ENCODE measurements at regions of chr9 and their contacts with region 1.

Region 1: GRCh38 chr9:35829084-35829763 is at the start of gene TMEM8B:
- DNase-seq: peak; percentile 99
- ATAC-seq: peak; percentile 93
- H3K4me3 Mint-ChIP-seq: peak within 1 kb of the TSS; percentile 86
- H3K27ac Mint-ChIP-seq: peak within 1 kb of the TSS; percentile 89
- H3K4me1 Mint-ChIP-seq: peaks cover 24% of the 10 kb centered on the region
- H3K27me3 Mint-ChIP-seq: no peaks in the 10 kb centered on the region
- CTCF ChIP-seq: no peak
- total RNA-seq, gene TMEM8B: 3.4 to 4.3 TPM

Region 2: DNA sequence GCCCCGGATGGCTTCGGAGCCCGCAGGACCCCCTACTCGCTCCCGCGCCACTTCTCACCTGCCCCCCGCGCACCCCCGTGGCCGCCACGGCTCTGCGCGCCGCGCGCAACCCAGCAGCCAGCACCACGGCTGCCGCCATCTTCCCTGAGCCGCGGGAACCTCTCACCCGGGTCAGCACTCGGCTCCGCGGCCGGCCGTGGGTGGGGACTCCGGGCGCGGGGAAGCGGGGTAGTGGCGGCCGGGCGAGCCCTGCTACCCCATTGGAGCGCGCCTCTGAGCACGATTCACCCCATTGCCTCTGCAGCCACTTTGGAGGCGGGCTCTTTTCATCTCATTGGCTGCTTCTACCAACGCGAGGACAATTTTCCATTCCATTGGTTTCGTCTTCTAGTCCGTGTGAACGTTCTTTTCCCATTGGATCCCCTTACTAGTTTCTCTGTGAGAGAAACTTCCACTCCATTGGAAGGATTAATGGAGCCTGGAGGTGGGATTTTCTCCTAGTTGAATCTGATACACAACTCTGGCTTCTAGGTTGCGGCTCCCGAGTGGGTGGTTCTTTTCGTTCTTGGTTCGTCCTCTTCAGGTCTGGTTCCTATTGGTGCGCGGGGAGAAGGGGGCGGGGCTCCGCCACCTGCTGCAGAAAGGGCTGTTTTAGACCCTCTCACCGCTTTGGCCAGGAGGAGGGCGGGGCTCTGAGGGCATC is 14.2 kb before region 1 on chr9 and contains the start of gene HINT2:
- CTCF ChIA-PET with region 1: interaction called, 18 read pairs
- POLR2A ChIA-PET with region 1: interaction called, 6 read pairs
- intact Hi-C with region 1: no loop called
- DNase-seq: peak; percentile 100
- ATAC-seq: peak; percentile 85
- H3K4me3 Mint-ChIP-seq: peak within 1 kb of the TSS; percentile 92
- H3K27ac Mint-ChIP-seq: peak within 1 kb of the TSS; percentile 97
- H3K4me1 Mint-ChIP-seq: peaks cover 34% of the 10 kb centered on the region
- H3K27me3 Mint-ChIP-seq: no peaks in the 10 kb centered on the region
- CTCF ChIP-seq: no peak
- total RNA-seq, gene HINT2: 53.4 to 62.7 TPM

Region 3: GRCh38 chr9:35844716-35845270 is 15.6 kb after region 1 on chr9:
- CTCF ChIA-PET with region 1: interaction called, 10 read pairs
- POLR2A ChIA-PET with region 1: interaction called, 3 read pairs
- intact Hi-C with region 1: no loop called
- DNase-seq: peak; percentile 37
- ATAC-seq: no peak
- H3K4me3 Mint-ChIP-seq: no peak overlapping the region
- H3K27ac Mint-ChIP-seq: no peak overlapping the region
- H3K4me1 Mint-ChIP-seq: peaks cover 39% of the 10 kb centered on the region
- H3K27me3 Mint-ChIP-seq: no peaks in the 10 kb centered on the region
- CTCF ChIP-seq: no peak

Region 4: DNA sequence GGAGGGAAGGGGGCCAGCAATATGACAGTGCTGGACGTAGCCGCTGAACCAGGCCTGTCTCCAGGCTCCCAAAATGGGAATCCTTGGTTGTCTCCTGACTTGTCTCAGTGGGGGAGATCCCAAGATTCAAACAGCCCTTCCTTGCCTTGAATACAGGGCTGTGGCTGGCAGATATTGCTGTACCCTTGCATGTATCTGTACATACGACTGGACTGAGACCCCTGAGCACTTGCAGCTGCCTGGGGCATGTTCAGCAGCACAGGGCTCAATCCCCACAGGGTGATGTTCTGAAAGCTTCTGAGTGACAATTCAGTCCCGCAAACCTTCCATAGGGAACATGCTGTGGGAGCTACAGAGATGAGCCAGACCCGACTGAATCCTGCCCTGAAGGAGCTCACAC is 27.7 kb after region 1 on chr9:
- CTCF ChIA-PET with region 1: interaction called, 12 read pairs
- POLR2A ChIA-PET with region 1: no interaction called
- intact Hi-C with region 1: no loop called
- DNase-seq: no peak
- ATAC-seq: no peak
- H3K4me3 Mint-ChIP-seq: no peak overlapping the region
- H3K27ac Mint-ChIP-seq: no peak overlapping the region
- H3K4me1 Mint-ChIP-seq: no peaks in the 10 kb centered on the region
- H3K27me3 Mint-ChIP-seq: peaks cover 3% of the 10 kb centered on the region
- CTCF ChIP-seq: no peak

Region 5: DNA sequence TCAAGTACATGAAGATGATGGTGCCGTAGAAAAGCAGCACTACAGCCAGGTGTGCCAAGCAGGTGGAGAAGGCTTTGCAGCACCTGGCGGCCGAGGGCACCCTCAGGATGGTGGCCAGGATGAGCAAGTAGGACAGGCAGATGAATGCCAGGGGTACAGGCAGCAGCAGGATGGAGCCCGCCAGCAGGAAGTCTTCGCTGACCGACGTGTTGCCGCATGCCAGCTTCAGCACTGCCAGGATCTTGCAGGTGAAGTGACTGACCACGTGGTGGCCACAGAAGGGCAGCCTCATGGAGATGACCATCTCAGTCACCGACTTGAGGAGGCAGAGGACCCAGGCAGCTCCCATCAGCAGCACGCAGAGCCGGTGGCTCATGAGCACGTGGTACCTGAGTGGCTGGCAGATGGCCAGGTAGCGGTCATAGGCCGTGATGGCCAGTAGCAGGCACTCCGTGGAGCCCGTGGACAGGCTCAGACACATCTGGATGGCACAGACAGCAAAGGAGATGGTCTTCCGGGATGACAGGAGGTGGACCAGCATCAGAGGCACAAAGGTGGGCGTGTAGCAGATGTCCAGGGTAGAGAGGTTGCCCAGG is 40.5 kb after region 1 on chr9:
- CTCF ChIA-PET with region 1: no interaction called
- POLR2A ChIA-PET with region 1: no interaction called
- intact Hi-C with region 1: no loop called
- DNase-seq: no peak
- ATAC-seq: no peak
- H3K4me3 Mint-ChIP-seq: no peak overlapping the region
- H3K27ac Mint-ChIP-seq: no peak overlapping the region
- H3K4me1 Mint-ChIP-seq: no peaks in the 10 kb centered on the region
- H3K27me3 Mint-ChIP-seq: peaks cover 4% of the 10 kb centered on the region
- CTCF ChIP-seq: no peak